ENCODE measurements at regions of chr20 and their contacts with region 1.

Region 1: GRCh38 chr20:37384683-37385174 is 38.8 kb downstream of the SRC start:
- DNase-seq: peak; percentile 38
- H3K4me3 Mint-ChIP-seq: no peak overlapping the region
- H3K27ac Mint-ChIP-seq: no peak overlapping the region
- H3K4me1 Mint-ChIP-seq: peaks cover 5% of the 10 kb centered on the region
- H3K27me3 Mint-ChIP-seq: no peaks in the 10 kb centered on the region
- CTCF ChIP-seq: peak; percentile 78

Region 2: DNA sequence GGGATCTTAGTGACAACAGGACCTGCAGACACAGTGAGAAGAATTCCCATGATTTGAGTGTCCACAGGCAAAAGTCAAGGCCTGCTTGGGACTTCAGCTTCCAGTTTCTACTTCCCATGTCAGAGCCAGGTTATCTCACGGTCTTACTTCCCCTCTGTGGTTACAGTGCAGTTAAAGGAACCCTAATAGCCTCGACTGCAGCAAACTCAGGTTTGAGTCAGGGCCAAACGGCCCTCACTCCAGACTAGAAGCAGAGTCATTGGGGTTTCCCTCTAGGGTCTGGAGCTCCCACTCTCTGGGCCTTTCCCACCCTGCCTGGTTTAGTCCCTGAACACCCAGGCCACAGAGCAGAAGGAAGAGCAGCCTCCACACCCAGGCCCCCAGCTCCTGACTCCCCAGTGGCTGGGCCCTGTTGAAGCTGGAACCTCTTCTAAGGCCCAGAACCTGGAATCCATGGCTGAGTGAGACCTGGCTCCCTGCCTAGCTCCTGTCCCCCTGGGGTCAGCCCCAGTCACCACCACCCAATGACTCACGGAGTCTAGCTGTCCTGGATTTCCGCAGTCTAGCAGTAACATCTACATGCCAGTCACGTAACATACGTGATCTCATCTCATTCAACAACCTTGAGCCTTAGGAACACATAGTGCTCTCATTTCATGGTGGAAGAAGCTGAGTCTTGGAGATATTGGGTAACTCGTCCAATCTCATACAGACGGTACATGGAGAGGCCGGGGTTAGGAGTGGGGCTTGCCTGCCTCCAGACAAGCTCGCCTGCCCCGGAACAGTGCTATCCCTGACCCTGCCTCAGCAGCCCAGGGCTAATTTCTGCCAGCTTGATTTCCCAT is 113.9 kb before region 1 on chr20:
- CTCF ChIA-PET with region 1: interaction called, 43 read pairs
- POLR2A ChIA-PET with region 1: no interaction called
- intact Hi-C with region 1: no loop called
- DNase-seq: peak; percentile 64
- H3K4me3 Mint-ChIP-seq: no peak overlapping the region
- H3K27ac Mint-ChIP-seq: no peak overlapping the region
- H3K4me1 Mint-ChIP-seq: peaks cover 15% of the 10 kb centered on the region
- H3K27me3 Mint-ChIP-seq: no peaks in the 10 kb centered on the region
- CTCF ChIP-seq: no peak

Region 3: GRCh38 chr20:37276494-37277252 is 108.1 kb before region 1 on chr20:
- CTCF ChIA-PET with region 1: interaction called, 43 read pairs
- POLR2A ChIA-PET with region 1: no interaction called
- intact Hi-C with region 1: no loop called
- DNase-seq: peak; percentile 78
- H3K4me3 Mint-ChIP-seq: no peak overlapping the region
- H3K27ac Mint-ChIP-seq: peak overlapping the region; percentile 34
- H3K4me1 Mint-ChIP-seq: peaks cover 13% of the 10 kb centered on the region
- H3K27me3 Mint-ChIP-seq: no peaks in the 10 kb centered on the region
- CTCF ChIP-seq: peak; percentile 14

Region 4: GRCh38 chr20:37282556-37282955 is 102.2 kb before region 1 on chr20:
- CTCF ChIA-PET with region 1: interaction called, 35 read pairs
- POLR2A ChIA-PET with region 1: interaction called, 5 read pairs
- intact Hi-C with region 1: loop called (anchors 2 kb)
- DNase-seq: peak; percentile 60
- H3K4me3 Mint-ChIP-seq: no peak overlapping the region
- H3K27ac Mint-ChIP-seq: no peak overlapping the region
- H3K4me1 Mint-ChIP-seq: peaks cover 5% of the 10 kb centered on the region
- H3K27me3 Mint-ChIP-seq: no peaks in the 10 kb centered on the region
- CTCF ChIP-seq: peak; percentile 56

Region 5: DNA sequence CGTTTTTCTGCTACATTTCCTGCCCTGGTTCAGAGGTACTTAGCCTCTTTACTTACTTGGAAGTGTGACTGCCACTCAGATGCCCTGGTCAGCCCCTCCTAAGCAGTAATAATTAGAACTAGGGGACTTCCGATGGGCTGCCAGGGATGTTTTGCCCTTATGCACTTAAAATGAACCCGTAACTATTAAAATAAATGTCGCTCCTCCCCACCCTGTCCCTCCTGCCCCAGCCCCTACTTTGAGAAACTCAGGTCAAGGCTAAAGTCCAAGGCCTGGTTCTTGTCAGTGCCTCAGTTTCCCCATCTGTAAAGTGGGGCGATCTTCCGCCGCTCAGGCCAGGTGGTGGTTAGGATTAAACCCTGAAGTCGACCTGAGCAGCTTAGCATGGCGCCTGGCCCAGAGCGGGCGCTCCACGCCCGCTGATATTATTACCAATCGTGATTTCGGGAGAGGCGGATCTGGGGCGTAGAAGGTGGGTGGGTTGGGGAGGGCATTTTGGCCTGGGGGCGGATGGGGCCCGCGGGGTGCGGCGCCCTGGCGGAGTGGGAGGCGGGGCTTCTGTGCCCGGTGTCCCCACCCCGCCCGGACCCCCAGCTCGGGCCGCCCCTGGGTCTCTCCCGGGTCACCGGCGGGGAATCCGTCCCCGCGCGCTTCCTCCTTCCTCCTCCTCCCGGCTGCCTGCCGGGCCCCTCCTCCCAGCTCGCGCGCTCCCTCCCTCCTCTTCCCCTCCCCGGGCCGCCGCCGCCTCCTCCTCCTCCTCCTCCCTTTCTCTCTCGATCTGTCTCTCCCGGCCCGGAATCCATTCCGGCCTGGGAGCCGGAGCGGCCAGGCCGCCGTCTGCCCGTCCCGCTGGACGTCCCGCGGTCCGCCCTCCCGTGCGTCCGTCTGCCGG is 39.1 kb before region 1 on chr20 and contains the start of gene SRC:
- CTCF ChIA-PET with region 1: interaction called, 10 read pairs
- POLR2A ChIA-PET with region 1: no interaction called
- intact Hi-C with region 1: no loop called
- DNase-seq: peak; percentile 74
- H3K4me3 Mint-ChIP-seq: peak within 1 kb of the TSS; percentile 75
- H3K27ac Mint-ChIP-seq: peak within 1 kb of the TSS; percentile 54
- H3K4me1 Mint-ChIP-seq: peaks cover 25% of the 10 kb centered on the region
- H3K27me3 Mint-ChIP-seq: no peaks in the 10 kb centered on the region
- CTCF ChIP-seq: no peak
- total RNA-seq, gene SRC: 28.1 and 29.5 TPM in 2 replicates

Region 6: GRCh38 chr20:37365760-37366638 is 18.7 kb before region 1 on chr20:
- CTCF ChIA-PET with region 1: interaction called, 13 read pairs
- POLR2A ChIA-PET with region 1: interaction called, 3 read pairs
- intact Hi-C with region 1: no loop called
- DNase-seq: no peak
- H3K4me3 Mint-ChIP-seq: no peak overlapping the region
- H3K27ac Mint-ChIP-seq: no peak overlapping the region
- H3K4me1 Mint-ChIP-seq: no peaks in the 10 kb centered on the region
- H3K27me3 Mint-ChIP-seq: no peaks in the 10 kb centered on the region
- CTCF ChIP-seq: no peak

Region 7: GRCh38 chr20:37373020-37373598 is 11.6 kb before region 1 on chr20:
- CTCF ChIA-PET with region 1: interaction called, 24 read pairs
- POLR2A ChIA-PET with region 1: interaction called, 3 read pairs
- intact Hi-C with region 1: no loop called
- DNase-seq: no peak
- H3K4me3 Mint-ChIP-seq: no peak overlapping the region
- H3K27ac Mint-ChIP-seq: no peak overlapping the region
- H3K4me1 Mint-ChIP-seq: no peaks in the 10 kb centered on the region
- H3K27me3 Mint-ChIP-seq: no peaks in the 10 kb centered on the region
- CTCF ChIP-seq: no peak

Measured in MCF 10A (cell line).